ENCODE measurements at regions of chr19 and their contacts with region 1.

Region 1: DNA sequence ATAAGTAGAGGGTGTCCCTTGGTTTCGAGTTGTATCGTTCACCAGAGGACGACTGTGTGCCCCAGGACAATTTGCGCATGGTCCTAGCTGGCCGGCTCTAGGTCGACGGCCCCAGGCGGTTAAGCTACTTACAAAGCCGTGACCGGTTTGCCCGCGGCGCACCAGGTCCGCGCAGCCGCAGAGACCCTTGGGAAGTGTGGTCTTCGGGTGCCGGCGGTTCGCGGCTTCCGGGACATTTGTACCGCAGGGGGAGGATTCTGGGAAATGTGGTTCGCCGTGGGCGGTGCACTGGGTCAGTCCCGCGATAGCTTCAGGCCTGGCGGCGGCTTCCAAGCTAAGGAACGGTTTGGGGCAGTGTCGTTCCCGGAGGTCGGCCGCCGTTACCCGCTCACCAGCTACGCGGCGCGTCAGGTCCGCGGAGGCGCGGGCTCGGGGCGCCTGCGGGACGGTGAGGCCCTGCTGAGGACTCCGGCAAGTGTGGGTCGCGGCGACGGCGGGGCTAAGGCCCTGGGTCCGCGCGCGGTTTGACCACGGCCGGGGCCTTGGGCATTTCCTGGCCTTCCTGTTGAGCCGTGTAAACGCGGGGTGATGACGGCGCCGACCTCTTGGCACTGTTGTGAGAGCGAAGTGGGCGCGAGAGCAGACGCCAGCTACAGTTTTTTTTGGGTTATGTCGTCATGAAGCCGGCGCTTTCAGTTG is at the start of gene ZNF302:
- DNase-seq: peak; percentile 93 to 99 (median 94)

Region 2: GRCh38 chr19:34733826-34734600 is 56.5 kb after region 1 on chr19 and contains the start of gene ZNF181:
- intact Hi-C with region 1: loop called (anchors 1 kb)
- DNase-seq: peak; percentile 79 to 98 (median 89)

Region 3: DNA sequence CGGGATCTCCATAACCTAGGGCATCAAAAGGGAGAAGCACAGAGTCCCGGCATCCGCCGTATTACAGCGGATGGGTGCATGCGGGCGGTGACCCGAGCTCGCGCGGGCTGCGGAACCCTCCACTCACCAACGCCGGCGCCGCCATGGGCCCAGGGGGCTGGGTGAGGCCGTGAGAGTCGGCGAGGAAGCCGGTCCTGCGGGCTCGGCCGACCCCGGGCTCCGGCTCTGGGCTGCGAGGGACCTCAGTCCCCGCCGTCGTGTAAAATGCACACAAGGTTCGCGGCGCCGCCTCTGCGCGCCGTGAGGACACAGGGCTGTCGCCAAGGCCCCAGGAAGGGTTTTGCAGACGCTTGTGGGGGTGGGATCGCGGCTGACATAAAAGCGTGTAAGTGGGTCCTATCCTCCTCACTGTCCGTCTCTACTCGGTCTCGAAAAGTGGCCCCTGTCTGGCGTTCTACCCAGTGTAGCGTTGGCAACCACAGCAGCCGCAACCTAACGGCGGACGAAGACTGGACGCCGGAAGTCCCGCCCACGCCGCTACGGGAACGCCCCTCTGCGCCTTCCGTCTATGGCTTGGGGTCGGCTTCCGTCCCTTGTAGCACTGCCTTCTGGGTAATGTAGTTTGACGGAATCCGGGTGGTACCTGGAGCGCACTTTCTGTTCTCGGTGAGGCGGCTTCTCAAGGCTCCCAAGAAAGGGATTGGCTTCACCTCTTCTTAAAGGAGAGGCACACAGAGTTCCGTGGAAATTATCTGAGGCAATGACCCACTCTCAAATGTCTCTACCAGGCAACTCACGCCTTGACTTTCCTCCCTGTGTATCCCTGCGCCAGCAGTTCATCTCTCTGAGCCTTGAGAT is 95.4 kb after region 1 on chr19 and contains the start of gene ZNF599:
- intact Hi-C with region 1: loop called (anchors 2 kb)
- DNase-seq: peak; percentile 76 to 98 (median 88)